Ovary (tissue), 10 donors: ENCODE measurements at regions of chr14 and their contacts with region 1.

Region 1: GRCh38 chr14:67999693-68000384 is 180.3 kb downstream of the RAD51B start:
- DNase-seq: no peak
- H3K4me3 ChIP-seq: no peak overlapping the region
- H3K27ac ChIP-seq: peak overlapping the region in 1 of 2 donors; percentile 45
- H3K4me1 ChIP-seq: peaks cover 3% of the 10 kb centered on the region
- H3K27me3 ChIP-seq: no peaks in the 10 kb centered on the region
- CTCF ChIP-seq: no peak
- EP300 ChIP-seq: no peak
- POLR2A ChIP-seq: no peak

Region 2: GRCh38 chr14:68042608-68043210 is 42.9 kb after region 1 on chr14:
- intact Hi-C with region 1: loop called in 1 of 4 experiments (anchors 10 kb)
- DNase-seq: no peak
- H3K4me3 ChIP-seq: no peak overlapping the region
- H3K27ac ChIP-seq: peak overlapping the region in 1 of 2 donors; percentile 58
- H3K4me1 ChIP-seq: peaks cover 17% of the 10 kb centered on the region
- H3K27me3 ChIP-seq: no peaks in the 10 kb centered on the region
- CTCF ChIP-seq: no peak
- EP300 ChIP-seq: no peak
- POLR2A ChIP-seq: no peak